Dorsolateral prefrontal cortex (tissue), 120 donors: ENCODE measurements at regions of chr17 and their contacts with region 1.

Region 1: DNA sequence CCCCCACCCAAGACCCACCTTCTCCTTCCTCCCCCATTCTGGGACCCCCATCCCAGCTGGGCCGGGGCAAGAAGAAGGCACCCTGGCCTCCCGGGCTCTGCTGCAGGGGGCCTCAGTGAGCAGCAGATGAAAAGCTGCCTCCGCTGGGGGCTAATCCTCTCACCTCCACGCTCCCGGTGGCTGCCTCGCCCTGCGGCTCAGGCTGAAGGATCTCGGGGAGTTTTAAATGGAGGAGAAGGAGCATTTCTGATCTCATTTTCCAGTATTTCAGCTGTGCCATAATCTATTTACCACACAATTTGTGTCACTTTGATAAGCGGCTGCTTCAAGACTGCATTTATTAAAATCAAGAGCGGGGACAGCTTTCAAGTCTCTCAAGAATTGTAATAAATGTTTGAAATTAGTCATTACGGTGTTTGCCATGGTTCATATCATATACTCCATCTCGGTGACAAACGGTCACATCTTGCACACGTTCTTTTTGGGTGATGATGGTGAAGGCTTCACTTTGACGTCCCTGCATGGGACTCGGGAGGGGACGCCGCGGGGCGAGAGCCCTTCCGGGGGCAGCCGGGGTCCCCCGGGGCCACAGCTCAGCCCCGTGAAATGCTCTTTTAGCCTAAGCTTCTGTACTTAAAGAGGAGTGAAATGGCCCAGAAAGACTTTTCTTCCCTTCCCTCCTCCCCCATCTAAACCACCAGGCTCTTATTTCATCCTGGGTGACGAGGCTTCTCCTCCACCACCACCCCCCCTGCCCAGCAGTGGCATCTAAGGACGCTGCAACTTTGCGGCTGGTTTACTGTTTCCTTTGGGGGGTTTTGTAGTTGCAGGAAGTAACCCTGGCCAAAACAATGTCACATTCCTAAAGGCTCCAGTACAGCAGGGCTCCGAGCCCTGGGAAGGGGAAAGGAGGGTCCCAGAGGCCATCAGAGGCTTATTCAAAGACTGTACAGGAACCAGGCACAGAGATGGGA is 313.1 kb upstream of the TNRC6C start:
- DNase-seq: no peak
- H3K4me3 ChIP-seq: no peak overlapping the region
- H3K27ac ChIP-seq: peak overlapping the region in 1 of 59 donors; percentile 66
- H3K27me3 ChIP-seq: peaks cover 0 to 3% (median 0%) of the 10 kb centered on the region in 45 donors
- CTCF ChIP-seq: no peak

Region 2: GRCh38 chr17:76893623-76894334 is 751.6 kb before region 1 on chr17:
- intact Hi-C with region 1: no loop called
- DNase-seq: peak in 1 of 10 donors; percentile 51
- H3K4me3 ChIP-seq: no peak overlapping the region
- H3K27ac ChIP-seq: peak overlapping the region in 39 of 59 donors; percentile 6 to 82 (median 55)
- H3K27me3 ChIP-seq: no peaks in the 10 kb centered on the region
- CTCF ChIP-seq: no peak

Region 3: DNA sequence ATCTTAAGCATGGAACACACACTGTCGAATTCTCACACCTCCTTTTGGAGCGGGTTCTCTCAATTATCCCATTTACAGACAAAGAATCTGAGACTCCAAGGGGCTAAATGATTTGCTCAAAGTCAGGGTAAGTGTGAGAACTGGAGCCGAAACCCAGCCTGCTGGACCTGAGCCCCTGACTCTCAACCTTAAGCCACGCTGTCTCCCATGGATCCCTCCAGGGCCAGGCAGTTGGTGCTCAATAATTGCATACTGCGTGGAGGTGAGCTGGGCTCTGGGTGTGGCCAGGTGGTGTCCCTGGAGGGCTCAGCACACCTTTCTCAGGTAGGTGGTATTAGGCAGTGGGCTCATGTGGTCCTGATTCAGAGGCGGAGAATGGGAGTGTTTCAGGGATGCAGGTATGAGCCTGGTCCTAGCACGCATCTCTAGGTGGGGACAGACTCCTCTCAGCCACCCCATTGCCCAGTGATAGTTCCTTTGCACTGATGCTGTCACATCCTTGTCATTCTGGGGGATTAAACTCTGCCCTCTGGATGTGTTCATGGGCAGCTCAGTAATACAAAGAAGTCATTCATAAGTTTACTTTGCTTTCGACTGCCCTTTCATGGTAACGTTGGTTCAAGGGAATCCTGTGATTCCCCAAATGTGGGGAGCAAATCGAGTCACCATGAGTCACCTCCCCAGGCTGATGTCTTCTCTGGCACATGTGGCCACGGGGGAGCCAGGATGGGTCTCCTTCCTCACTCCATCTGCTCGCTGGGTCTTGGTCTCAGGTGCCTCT is 86.3 kb before region 1 on chr17:
- intact Hi-C with region 1: no loop called
- DNase-seq: no peak
- H3K4me3 ChIP-seq: no peak overlapping the region
- H3K27ac ChIP-seq: no peak overlapping the region
- H3K27me3 ChIP-seq: peaks cover 0 to 2% (median 0%) of the 10 kb centered on the region in 45 donors
- CTCF ChIP-seq: no peak

Region 4: GRCh38 chr17:77590951-77591735 is 54.2 kb before region 1 on chr17:
- intact Hi-C with region 1: loop called in 1 of 2 experiments (anchors 10 kb)
- DNase-seq: no peak
- H3K4me3 ChIP-seq: no peak overlapping the region
- H3K27ac ChIP-seq: no peak overlapping the region
- H3K27me3 ChIP-seq: peaks cover 0 to 5% (median 0%) of the 10 kb centered on the region in 45 donors
- CTCF ChIP-seq: no peak